CD8-positive, alpha-beta T cell (primary cell): ENCODE measurements at regions of chr6 and their contacts with region 1.

Region 1: GRCh38 chr6:16206595-16207037 is 31.8 kb upstream of the GMPR start:
- DNase-seq: peak; percentile 2 to 68 (median 39)
- ATAC-seq: peak; percentile 79
- H3K4me3 ChIP-seq: no peak overlapping the region
- H3K4me3 Mint-ChIP-seq: no peak overlapping the region
- H3K27ac ChIP-seq: no peak overlapping the region
- H3K27ac Mint-ChIP-seq: no peak overlapping the region
- H3K4me1 ChIP-seq: no peaks in the 10 kb centered on the region
- H3K4me1 Mint-ChIP-seq: no peaks in the 10 kb centered on the region
- H3K27me3 ChIP-seq: no peaks in the 10 kb centered on the region
- H3K27me3 Mint-ChIP-seq: peaks cover 8% of the 10 kb centered on the region
- CTCF ChIP-seq: peak; percentile 100

Region 2: DNA sequence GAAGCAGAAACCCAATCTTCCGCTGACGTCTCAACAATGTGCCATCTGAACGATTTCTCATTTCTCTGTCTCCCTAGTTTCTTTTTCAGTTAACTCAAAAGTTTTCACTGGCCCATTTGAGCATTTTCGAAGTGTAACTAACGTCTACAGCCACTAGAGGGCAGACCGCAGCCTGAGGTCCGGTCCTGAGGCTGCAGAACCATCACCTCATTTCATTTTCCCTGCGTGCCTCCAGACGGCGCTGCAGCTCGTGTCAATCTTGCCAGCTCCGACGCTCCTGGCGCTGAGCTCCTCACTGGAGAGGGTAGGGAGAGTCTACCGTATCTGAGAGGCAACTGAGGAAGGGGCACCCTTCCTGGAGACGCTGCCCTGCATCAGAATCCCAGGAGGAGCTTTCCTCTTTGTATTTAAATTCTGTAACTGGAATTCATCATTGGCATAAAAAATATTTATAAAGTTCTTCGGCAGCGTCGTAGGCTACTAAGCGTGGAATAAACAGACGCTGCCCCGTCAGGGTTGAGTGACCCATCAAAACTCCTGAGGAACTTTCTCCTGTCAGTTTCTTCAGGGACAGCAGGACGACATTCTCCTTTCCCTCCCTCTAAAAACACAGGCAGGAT is 515.3 kb before region 1 on chr6:
- CTCF ChIA-PET with region 1: interaction called, 154 read pairs
- POLR2A ChIA-PET with region 1: interaction called, 3 read pairs
- intact Hi-C with region 1: loop called (anchors 1 kb)
- DNase-seq: peak; percentile 55 to 92 (median 76)
- ATAC-seq: peak; percentile 100
- H3K4me3 ChIP-seq: no peak overlapping the region
- H3K4me3 Mint-ChIP-seq: no peak overlapping the region
- H3K27ac ChIP-seq: no peak overlapping the region
- H3K27ac Mint-ChIP-seq: no peak overlapping the region
- H3K4me1 ChIP-seq: no peaks in the 10 kb centered on the region
- H3K4me1 Mint-ChIP-seq: peaks cover 4% of the 10 kb centered on the region
- H3K27me3 ChIP-seq: no peaks in the 10 kb centered on the region
- H3K27me3 Mint-ChIP-seq: peaks cover 8% of the 10 kb centered on the region
- CTCF ChIP-seq: peak; percentile 100

Region 3: DNA sequence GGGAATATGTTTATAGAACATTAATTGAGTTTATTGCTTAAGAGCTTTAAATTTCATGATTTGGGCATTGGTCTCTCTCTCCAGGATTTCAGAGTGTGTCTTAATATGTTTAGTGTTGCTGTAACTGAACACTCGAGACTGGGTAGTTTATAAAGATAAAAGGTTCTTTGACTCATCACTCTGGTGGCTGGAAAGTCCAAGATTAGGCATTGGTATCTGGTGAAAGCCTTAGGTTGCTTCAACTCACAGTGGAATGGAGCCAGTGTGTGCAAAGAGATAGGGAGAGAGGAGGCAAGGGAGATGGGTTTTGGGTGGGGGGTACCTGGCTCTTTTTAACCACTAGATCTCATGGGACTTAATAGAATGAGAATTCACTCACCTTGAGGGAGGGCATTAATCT is 508.1 kb before region 1 on chr6:
- CTCF ChIA-PET with region 1: interaction called, 154 read pairs
- POLR2A ChIA-PET with region 1: interaction called, 3 read pairs
- intact Hi-C with region 1: no loop called
- DNase-seq: no peak
- ATAC-seq: no peak
- H3K4me3 ChIP-seq: no peak overlapping the region
- H3K4me3 Mint-ChIP-seq: no peak overlapping the region
- H3K27ac ChIP-seq: no peak overlapping the region
- H3K27ac Mint-ChIP-seq: no peak overlapping the region
- H3K4me1 ChIP-seq: no peaks in the 10 kb centered on the region
- H3K4me1 Mint-ChIP-seq: no peaks in the 10 kb centered on the region
- H3K27me3 ChIP-seq: no peaks in the 10 kb centered on the region
- H3K27me3 Mint-ChIP-seq: peaks cover 4% of the 10 kb centered on the region
- CTCF ChIP-seq: no peak

Region 4: GRCh38 chr6:16108921-16109658 is 97.5 kb before region 1 on chr6:
- CTCF ChIA-PET with region 1: no interaction called
- POLR2A ChIA-PET with region 1: no interaction called
- intact Hi-C with region 1: no loop called
- DNase-seq: no peak
- ATAC-seq: no peak
- H3K4me3 ChIP-seq: no peak overlapping the region
- H3K4me3 Mint-ChIP-seq: no peak overlapping the region
- H3K27ac ChIP-seq: no peak overlapping the region
- H3K27ac Mint-ChIP-seq: no peak overlapping the region
- H3K4me1 ChIP-seq: no peaks in the 10 kb centered on the region
- H3K4me1 Mint-ChIP-seq: no peaks in the 10 kb centered on the region
- H3K27me3 ChIP-seq: no peaks in the 10 kb centered on the region
- H3K27me3 Mint-ChIP-seq: peaks cover 7% of the 10 kb centered on the region
- CTCF ChIP-seq: no peak

Region 5: DNA sequence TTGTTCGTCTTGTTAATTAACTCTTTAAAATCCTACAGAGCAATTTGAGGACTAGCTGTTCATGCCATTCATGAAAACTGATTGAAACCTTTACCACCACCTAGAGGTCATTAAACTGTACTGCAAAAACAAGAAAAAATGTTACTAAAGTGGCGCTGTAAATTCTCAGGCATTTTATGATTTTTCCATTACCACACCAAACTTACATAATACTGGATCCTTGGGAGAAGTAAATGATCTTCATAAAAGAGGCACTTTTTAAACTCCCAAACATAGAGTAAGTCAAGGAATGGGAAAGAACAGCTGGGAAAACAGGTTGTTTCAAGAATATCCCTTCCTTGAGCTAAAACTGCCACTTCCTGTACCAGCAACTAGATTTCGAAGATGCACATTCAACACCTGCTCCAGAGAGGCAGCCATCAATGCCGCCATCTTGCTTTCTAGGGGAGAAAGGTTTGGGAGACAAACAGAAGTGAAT is 23.4 kb before region 1 on chr6:
- CTCF ChIA-PET with region 1: interaction called, 17 read pairs
- POLR2A ChIA-PET with region 1: no interaction called
- intact Hi-C with region 1: no loop called
- DNase-seq: peak in 2 of 9 experiments; percentile 44 to 62
- ATAC-seq: peak; percentile 36
- H3K4me3 ChIP-seq: no peak overlapping the region
- H3K4me3 Mint-ChIP-seq: no peak overlapping the region
- H3K27ac ChIP-seq: no peak overlapping the region
- H3K27ac Mint-ChIP-seq: no peak overlapping the region
- H3K4me1 ChIP-seq: peaks cover 17% of the 10 kb centered on the region
- H3K4me1 Mint-ChIP-seq: peaks cover 35% of the 10 kb centered on the region
- H3K27me3 ChIP-seq: no peaks in the 10 kb centered on the region
- H3K27me3 Mint-ChIP-seq: no peaks in the 10 kb centered on the region
- CTCF ChIP-seq: peak; percentile 89

Region 6: GRCh38 chr6:16216501-16217155 is 10.0 kb after region 1 on chr6:
- CTCF ChIA-PET with region 1: interaction called, 11 read pairs
- POLR2A ChIA-PET with region 1: no interaction called
- intact Hi-C with region 1: no loop called
- DNase-seq: peak in 1 of 9 experiments; percentile 17
- ATAC-seq: no peak
- H3K4me3 ChIP-seq: no peak overlapping the region
- H3K4me3 Mint-ChIP-seq: no peak overlapping the region
- H3K27ac ChIP-seq: no peak overlapping the region
- H3K27ac Mint-ChIP-seq: no peak overlapping the region
- H3K4me1 ChIP-seq: no peaks in the 10 kb centered on the region
- H3K4me1 Mint-ChIP-seq: no peaks in the 10 kb centered on the region
- H3K27me3 ChIP-seq: peaks cover 0 to 6% of the 10 kb centered on the region in 2 experiments
- H3K27me3 Mint-ChIP-seq: peaks cover 40% of the 10 kb centered on the region
- CTCF ChIP-seq: no peak